ENCODE measurements at regions of chrX and their contacts with region 1.

Region 1: DNA sequence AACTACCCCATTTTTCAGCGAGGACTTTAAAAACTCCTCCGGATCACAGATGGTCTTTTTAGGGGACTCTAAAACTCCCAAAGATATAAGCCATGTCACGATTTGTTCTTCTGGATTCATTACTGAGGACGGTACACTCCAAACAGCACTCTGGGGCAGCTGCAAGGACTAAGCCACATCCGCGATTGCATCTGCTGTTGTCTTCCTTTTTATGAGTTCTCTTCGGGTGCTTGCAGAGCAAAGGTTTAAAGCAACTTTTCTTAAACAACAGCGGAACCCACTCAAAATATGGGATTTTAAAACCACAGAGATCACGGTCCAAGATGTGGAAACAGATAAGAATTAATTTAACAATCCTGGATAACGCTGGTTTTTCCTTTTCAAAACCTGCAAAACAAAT is at the start of gene ARHGEF6:
- DNase-seq: peak; percentile 40 to 53 (median 43)
- H3K4me3 ChIP-seq: peak within 1 kb of the TSS; percentile 60 to 82
- H3K4me3 Mint-ChIP-seq: peak within 1 kb of the TSS; percentile 86 to 95 (median 94)
- H3K27ac ChIP-seq: peak within 1 kb of the TSS; percentile 69
- H3K27ac Mint-ChIP-seq: peak within 1 kb of the TSS; percentile 87 to 92 (median 90)
- H3K4me1 ChIP-seq: peaks cover 58% of the 10 kb centered on the region
- H3K4me1 Mint-ChIP-seq: peaks cover 41 to 83% (median 52%) of the 10 kb centered on the region in 4 donors
- H3K27me3 ChIP-seq: no peaks in the 10 kb centered on the region
- H3K27me3 Mint-ChIP-seq: no peaks in the 10 kb centered on the region
- total RNA-seq, gene ARHGEF6: 81.3 to 83.4 TPM

Region 2: GRCh38 chrX:136725446-136726104 is 55.2 kb before region 1 on chrX:
- CTCF ChIA-PET with region 1: no interaction called
- POLR2A ChIA-PET with region 1: no interaction called
- intact Hi-C with region 1: no loop called
- DNase-seq: no peak
- H3K4me3 ChIP-seq: no peak overlapping the region
- H3K4me3 Mint-ChIP-seq: no peak overlapping the region
- H3K27ac ChIP-seq: no peak overlapping the region
- H3K27ac Mint-ChIP-seq: peak overlapping the region in 2 of 7 donors; percentile 29 to 53
- H3K4me1 ChIP-seq: peaks cover 22% of the 10 kb centered on the region
- H3K4me1 Mint-ChIP-seq: peaks cover 10 to 18% (median 17%) of the 10 kb centered on the region in 4 donors
- H3K27me3 ChIP-seq: no peaks in the 10 kb centered on the region
- H3K27me3 Mint-ChIP-seq: no peaks in the 10 kb centered on the region

Region 3: GRCh38 chrX:136767104-136767941 is 13.4 kb before region 1 on chrX:
- CTCF ChIA-PET with region 1: interaction called, 5 read pairs
- POLR2A ChIA-PET with region 1: interaction called, 66 read pairs
- intact Hi-C with region 1: loop called (anchors 1 kb)
- DNase-seq: peak; percentile 38 to 63 (median 58)
- H3K4me3 ChIP-seq: peak overlapping the region in 1 of 2 donors; percentile 41
- H3K4me3 Mint-ChIP-seq: peak overlapping the region; percentile 77 to 96 (median 82)
- H3K27ac ChIP-seq: peak overlapping the region; percentile 51
- H3K27ac Mint-ChIP-seq: peak overlapping the region in 6 of 7 donors; percentile 82 to 97 (median 93)
- H3K4me1 ChIP-seq: peaks cover 68% of the 10 kb centered on the region
- H3K4me1 Mint-ChIP-seq: peaks cover 37 to 74% (median 53%) of the 10 kb centered on the region in 4 donors
- H3K27me3 ChIP-seq: no peaks in the 10 kb centered on the region
- H3K27me3 Mint-ChIP-seq: no peaks in the 10 kb centered on the region

Region 4: GRCh38 chrX:136866337-136867095 is 85.8 kb after region 1 on chrX:
- CTCF ChIA-PET with region 1: no interaction called
- POLR2A ChIA-PET with region 1: interaction called, 13 read pairs
- intact Hi-C with region 1: loop called (anchors 10 kb)
- DNase-seq: no peak
- H3K4me3 ChIP-seq: no peak overlapping the region
- H3K4me3 Mint-ChIP-seq: peak overlapping the region in 1 of 8 donors; percentile 35
- H3K27ac ChIP-seq: no peak overlapping the region
- H3K27ac Mint-ChIP-seq: peak overlapping the region in 6 of 7 donors; percentile 47 to 77 (median 70)
- H3K4me1 ChIP-seq: peaks cover 23% of the 10 kb centered on the region
- H3K4me1 Mint-ChIP-seq: peaks cover 15 to 48% (median 30%) of the 10 kb centered on the region in 4 donors
- H3K27me3 ChIP-seq: no peaks in the 10 kb centered on the region
- H3K27me3 Mint-ChIP-seq: no peaks in the 10 kb centered on the region

Region 5: DNA sequence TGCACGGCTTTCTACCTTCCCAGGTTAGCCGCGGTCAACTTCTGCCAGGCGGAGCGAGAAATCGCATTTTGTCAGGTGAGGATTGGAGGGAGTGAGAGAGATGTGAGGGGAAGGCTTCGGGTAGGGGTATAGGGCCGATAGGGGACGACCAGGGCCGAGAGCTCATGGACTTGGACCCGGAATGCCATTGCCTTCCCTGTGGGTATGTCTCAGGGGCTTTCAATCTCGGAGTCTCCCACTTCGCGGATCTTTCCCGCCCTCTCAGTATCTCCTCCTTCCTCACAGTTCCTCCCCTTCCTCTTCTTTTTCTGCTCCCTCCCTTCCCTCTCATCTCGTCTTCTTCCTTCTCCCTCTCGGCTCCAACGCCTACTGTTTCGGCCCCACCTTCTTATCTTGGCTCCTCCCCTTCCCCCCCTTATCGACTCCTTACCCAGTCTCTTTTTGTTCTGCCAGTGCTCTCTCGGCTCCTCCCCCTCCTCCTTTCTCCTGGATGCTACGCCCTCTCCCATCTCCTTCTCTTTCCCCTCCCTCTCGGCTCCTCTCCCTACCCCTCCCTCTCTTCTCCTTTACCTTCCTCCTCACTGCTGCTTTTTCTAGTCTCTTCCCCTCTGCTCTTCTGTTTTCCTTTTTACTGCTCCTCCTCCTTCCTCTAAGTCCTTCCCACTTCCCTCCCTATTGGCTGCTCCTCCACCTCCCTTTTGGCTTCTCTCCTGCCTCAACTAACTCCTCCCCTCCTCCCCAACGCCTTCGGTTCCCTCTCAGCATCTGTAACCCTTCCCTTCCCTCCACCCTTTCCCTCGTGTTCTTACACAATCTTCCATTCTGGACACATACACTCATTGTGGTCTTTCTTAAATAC is 129.2 kb after region 1 on chrX:
- CTCF ChIA-PET with region 1: no interaction called
- POLR2A ChIA-PET with region 1: no interaction called
- intact Hi-C with region 1: loop called (anchors 2 kb)
- DNase-seq: peak; percentile 43 to 79 (median 48)
- H3K4me3 ChIP-seq: peak overlapping the region; percentile 61 to 83
- H3K4me3 Mint-ChIP-seq: peak overlapping the region; percentile 88 to 96 (median 94)
- H3K27ac ChIP-seq: peak overlapping the region; percentile 90
- H3K27ac Mint-ChIP-seq: peak overlapping the region; percentile 80 to 97 (median 93)
- H3K4me1 ChIP-seq: peaks cover 7% of the 10 kb centered on the region
- H3K4me1 Mint-ChIP-seq: peaks cover 8 to 22% (median 11%) of the 10 kb centered on the region in 4 donors
- H3K27me3 ChIP-seq: no peaks in the 10 kb centered on the region
- H3K27me3 Mint-ChIP-seq: no peaks in the 10 kb centered on the region

Measured in CD4-positive, alpha-beta memory T cell (primary cell).